Activated T-helper 1 cell treated with anti-CD3 and anti-CD28 coated beads, Interleukin-12 subunit alpha, Interleukin-12 subunit beta, Interleukin-2, Interleukin-4 antibody, amounts not matched to agents 30 ng/mL and 10 ng/mL and 1 ng/mL, durations not matched to agents 14 hours and 24 hours and 36 hours (primary cell): ENCODE measurements at regions of chr9 and their contacts with region 1.

Region 1: DNA sequence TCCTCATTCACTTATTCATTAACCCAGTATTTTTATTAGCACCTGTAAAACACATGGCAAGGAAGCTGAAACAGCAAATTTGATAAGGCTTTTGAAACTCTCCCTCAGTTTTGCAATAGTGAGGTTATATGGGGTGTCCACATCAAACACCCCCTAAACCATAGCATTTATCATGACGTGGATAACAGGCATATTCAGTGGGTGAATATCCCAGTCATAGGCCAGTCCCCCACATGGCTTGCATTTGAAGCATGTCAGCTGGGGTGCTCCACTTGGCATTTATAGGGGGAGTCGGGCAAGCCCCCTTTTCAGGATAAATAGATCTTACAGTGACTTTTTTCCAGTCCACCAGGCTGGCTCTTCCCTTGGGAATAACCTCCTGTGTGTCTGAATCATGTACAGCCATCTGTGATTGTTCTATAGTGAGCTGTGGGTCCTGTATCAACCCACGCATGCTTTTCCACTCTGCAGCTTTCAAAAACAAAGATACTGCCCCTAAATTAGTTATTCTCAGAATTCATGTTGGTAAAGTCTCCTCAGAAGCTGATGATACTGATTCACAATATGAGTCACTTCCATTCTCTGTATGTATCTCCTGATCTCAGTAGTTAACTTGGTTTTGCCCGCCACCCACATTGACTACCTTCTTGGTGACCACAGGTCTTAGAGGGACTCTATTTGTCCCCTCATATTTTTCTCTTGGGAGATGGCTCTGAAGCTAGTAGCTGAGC is 84.4 kb upstream of the SPIN1 start:
- DNase-seq: peak; percentile 48
- H3K4me3 Mint-ChIP-seq: peak overlapping the region; percentile 40
- H3K27ac Mint-ChIP-seq: peak overlapping the region; percentile 87
- H3K4me1 Mint-ChIP-seq: peaks cover 52% of the 10 kb centered on the region
- H3K27me3 Mint-ChIP-seq: peaks cover 2% of the 10 kb centered on the region

Region 2: GRCh38 chr9:87707805-87708506 is 595.9 kb before region 1 on chr9:
- intact Hi-C with region 1: loop called (anchors 1 kb)
- DNase-seq: no peak
- H3K4me3 Mint-ChIP-seq: no peak overlapping the region
- H3K27ac Mint-ChIP-seq: no peak overlapping the region
- H3K4me1 Mint-ChIP-seq: peaks cover 30% of the 10 kb centered on the region
- H3K27me3 Mint-ChIP-seq: peaks cover 33% of the 10 kb centered on the region

Region 3: DNA sequence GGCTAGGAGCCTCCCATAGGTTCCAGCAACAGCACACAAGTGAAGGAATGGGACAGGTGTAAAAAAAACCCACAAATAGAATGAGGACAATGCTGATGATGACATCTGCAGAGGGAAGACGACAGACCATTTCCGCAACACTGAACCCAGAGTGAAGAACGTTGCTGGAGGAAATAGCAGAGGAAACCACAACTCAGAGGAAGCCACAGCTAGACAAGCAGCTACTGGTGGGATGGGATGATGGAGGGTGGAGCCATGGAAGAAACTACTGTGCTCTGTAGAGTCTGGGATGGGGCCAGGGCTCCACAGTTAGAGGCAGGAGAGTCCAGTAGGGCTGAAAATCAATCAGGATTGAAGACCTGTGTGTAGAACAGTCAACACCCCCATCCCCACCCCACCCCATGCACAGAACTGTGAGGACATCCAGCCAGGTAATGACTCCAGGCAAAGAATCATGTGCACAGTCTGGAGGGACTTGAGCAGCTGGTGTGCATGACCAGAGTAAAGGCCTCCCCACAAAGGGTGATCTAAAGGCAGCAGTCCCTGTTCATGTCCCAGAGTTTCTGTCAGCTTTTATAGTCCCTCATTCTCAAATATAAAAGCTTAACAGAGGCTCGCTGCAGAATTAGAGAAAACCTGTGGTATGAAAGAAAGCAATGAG is 19.1 kb after region 1 on chr9:
- intact Hi-C with region 1: loop called (anchors 2 kb)
- DNase-seq: peak; percentile 68
- H3K4me3 Mint-ChIP-seq: peak overlapping the region; percentile 64
- H3K27ac Mint-ChIP-seq: peak overlapping the region; percentile 83
- H3K4me1 Mint-ChIP-seq: peaks cover 45% of the 10 kb centered on the region
- H3K27me3 Mint-ChIP-seq: no peaks in the 10 kb centered on the region

Region 4: GRCh38 chr9:88476491-88477271 is 172.8 kb after region 1 on chr9:
- intact Hi-C with region 1: loop called (anchors 1 kb)
- DNase-seq: no peak
- H3K4me3 Mint-ChIP-seq: no peak overlapping the region
- H3K27ac Mint-ChIP-seq: peak overlapping the region; percentile 69
- H3K4me1 Mint-ChIP-seq: peaks cover 25% of the 10 kb centered on the region
- H3K27me3 Mint-ChIP-seq: no peaks in the 10 kb centered on the region

Region 5: DNA sequence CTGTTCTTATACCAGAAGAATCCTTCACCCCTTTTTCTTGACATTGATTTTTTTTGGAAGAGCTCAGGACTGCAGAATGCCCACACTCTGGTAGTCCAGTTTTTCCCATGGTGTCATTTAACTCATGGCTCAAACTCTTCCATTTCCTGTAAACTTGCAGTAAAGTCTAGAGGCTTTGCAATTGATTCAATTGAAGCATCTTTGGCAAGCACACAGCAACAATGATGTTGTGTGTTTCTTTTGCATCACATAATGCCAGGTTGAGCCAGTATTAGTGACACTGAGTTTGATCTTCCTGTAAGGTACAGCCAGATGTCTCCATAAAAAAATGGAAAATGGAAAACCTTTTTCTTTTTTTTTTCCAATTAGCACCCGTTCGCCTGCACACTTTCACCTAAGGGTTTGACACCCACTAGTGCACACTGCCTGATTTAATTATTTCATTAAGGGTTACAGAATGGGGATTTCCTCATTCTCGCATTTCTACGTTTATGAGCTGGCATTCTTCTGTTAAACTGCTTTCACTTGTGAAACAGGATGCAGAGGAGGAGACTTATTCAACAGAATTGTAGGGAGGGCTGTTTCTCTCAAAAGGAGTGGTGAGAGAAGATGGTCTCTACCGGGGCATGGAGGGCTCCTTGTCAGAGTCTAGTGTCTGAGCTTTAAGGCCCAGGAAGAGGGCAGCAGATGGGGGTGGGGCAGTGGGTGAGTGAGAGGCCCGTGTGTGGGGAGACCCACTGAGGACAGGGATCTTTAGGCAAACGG is 685.1 kb after region 1 on chr9:
- intact Hi-C with region 1: loop called (anchors 1 kb)
- DNase-seq: peak; percentile 12
- H3K4me3 Mint-ChIP-seq: peak overlapping the region; percentile 77
- H3K27ac Mint-ChIP-seq: peak overlapping the region; percentile 82
- H3K4me1 Mint-ChIP-seq: peaks cover 25% of the 10 kb centered on the region
- H3K27me3 Mint-ChIP-seq: peaks cover 32% of the 10 kb centered on the region